Activated CD8-positive, alpha-beta T cell treated with anti-CD3 and anti-CD28 coated beads, Interleukin-2, amount 10 ng/mL, durations not matched to agents 7 days and 5 days (primary cell): ENCODE measurements at regions of chr1 and their contacts with region 1.

Region 1: GRCh38 chr1:15788624-15789301 is 18.7 kb downstream of the UQCRHL start:
- DNase-seq: no peak
- ATAC-seq: no peak
- H3K4me3 Mint-ChIP-seq: no peak overlapping the region
- H3K27ac Mint-ChIP-seq: no peak overlapping the region
- H3K4me1 Mint-ChIP-seq: peaks cover 2% of the 10 kb centered on the region
- H3K27me3 Mint-ChIP-seq: peaks cover 3% of the 10 kb centered on the region

Region 2: DNA sequence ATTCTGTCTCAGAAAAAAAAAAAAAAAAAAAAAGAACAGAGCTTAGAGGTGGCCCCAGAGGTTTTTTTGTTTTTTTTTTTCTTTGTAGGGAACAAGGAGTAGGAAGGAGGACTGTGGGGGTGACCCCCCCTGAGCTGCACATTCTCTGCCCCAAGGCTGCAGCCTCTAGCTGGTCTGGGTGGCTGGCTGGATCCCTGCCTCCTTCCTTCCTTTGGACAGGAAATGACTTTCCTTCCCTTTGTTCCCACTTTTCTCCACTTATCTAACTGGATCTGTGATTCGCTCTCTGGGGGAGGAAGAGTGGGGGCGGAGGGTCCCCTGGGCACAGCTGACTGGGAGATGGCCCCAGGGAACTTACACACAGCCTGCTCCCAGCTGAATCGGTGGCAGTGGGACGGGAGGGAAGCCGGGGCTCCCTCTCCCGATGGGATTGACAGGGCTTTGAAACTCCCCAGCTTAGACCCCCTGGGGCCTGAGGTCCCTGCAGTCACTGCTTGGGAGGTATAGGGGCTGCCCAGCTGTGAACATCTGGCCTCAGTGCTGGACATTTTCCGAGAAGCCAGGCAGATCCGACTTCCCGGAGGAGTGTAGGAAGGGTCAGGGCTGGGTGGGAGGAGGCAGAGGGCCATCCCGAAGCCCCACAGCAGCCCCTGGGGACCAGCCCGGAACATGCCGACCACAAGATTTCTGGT is 28.1 kb before region 1 on chr1:
- CTCF ChIA-PET with region 1: no interaction called
- POLR2A ChIA-PET with region 1: no interaction called
- DNase-seq: no peak
- ATAC-seq: no peak
- H3K4me3 Mint-ChIP-seq: no peak overlapping the region
- H3K27ac Mint-ChIP-seq: no peak overlapping the region
- H3K4me1 Mint-ChIP-seq: peaks cover 10% of the 10 kb centered on the region
- H3K27me3 Mint-ChIP-seq: peaks cover 34% of the 10 kb centered on the region

Region 3: DNA sequence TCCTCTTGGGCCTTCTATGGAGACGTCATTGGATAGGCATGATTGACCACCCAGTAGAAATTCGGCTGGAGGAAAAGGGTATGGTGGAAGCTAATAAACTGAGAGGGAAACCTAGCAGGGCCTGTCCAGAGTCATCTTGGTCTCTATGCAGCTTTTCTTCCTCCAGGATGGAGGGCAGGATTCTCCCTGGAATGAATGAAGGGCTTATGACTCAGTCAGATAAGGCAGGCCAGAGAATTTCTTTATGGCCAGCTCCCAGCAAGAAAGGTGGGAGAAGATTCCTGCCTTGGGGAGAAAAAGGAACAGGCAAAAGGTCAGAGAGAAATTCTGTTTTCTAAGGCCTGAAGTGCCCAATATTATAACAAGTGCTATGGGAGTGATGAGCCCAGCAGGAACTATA is 13.1 kb before region 1 on chr1:
- CTCF ChIA-PET with region 1: interaction called, 15 read pairs
- POLR2A ChIA-PET with region 1: no interaction called
- DNase-seq: no peak
- ATAC-seq: no peak
- H3K4me3 Mint-ChIP-seq: no peak overlapping the region
- H3K27ac Mint-ChIP-seq: no peak overlapping the region
- H3K4me1 Mint-ChIP-seq: no peaks in the 10 kb centered on the region
- H3K27me3 Mint-ChIP-seq: peaks cover 3% of the 10 kb centered on the region

Region 4: GRCh38 chr1:15803354-15803753 is 14.6 kb after region 1 on chr1:
- CTCF ChIA-PET with region 1: interaction called, 20 read pairs
- POLR2A ChIA-PET with region 1: no interaction called
- DNase-seq: peak; percentile 34
- ATAC-seq: no peak
- H3K4me3 Mint-ChIP-seq: no peak overlapping the region
- H3K27ac Mint-ChIP-seq: no peak overlapping the region
- H3K4me1 Mint-ChIP-seq: no peaks in the 10 kb centered on the region
- H3K27me3 Mint-ChIP-seq: peaks cover 10% of the 10 kb centered on the region

Region 5: DNA sequence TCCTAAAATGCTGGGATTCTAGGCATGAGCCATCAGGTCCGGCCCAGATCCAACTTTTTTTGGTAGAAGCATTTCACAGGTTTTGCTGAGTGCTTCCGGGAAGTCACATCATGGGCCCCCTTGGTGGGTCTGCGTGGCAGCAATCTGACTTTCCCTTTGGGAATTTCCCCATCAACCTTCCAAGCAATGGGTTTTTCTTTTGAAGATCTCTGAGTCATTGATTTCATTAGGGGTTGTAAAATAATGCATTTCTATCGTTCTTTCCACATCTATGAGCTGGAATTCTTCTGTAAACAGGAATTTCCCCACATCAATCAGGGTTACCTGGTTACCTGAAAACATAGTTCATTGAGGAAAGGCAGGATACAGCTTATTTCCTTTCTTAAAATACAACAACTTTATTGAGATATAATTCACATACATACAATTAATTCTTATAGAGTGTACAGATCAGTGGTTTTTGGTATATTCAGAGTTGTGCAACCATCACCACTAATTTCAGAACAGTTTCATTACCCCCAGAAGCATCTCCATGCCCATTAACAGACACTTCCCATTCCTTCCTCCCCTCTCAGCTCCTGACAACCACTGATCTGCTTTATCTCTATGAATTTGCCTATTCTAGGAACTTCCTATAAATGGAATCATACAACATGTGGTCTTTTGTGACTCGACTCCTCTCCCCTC is 197.0 kb after region 1 on chr1:
- CTCF ChIA-PET with region 1: interaction called, 10 read pairs
- POLR2A ChIA-PET with region 1: no interaction called
- DNase-seq: no peak
- ATAC-seq: no peak
- H3K4me3 Mint-ChIP-seq: no peak overlapping the region
- H3K27ac Mint-ChIP-seq: no peak overlapping the region
- H3K4me1 Mint-ChIP-seq: no peaks in the 10 kb centered on the region
- H3K27me3 Mint-ChIP-seq: no peaks in the 10 kb centered on the region